ENCODE measurements at regions of chr5 and their contacts with region 1.

Region 1: GRCh38 chr5:32489791-32490582 is 45.4 kb upstream of the ZFR start:
- DNase-seq: no peak
- H3K4me3 ChIP-seq: no peak overlapping the region
- H3K27me3 ChIP-seq: no peaks in the 10 kb centered on the region
- CTCF ChIP-seq: peak; percentile 74

Region 2: GRCh38 chr5:32475334-32476097 is 14.5 kb before region 1 on chr5:
- CTCF ChIA-PET with region 1: interaction called, 12 read pairs
- POLR2A ChIA-PET with region 1: no interaction called
- DNase-seq: no peak
- H3K4me3 ChIP-seq: no peak overlapping the region
- H3K27me3 ChIP-seq: no peaks in the 10 kb centered on the region
- CTCF ChIP-seq: no peak

Region 3: DNA sequence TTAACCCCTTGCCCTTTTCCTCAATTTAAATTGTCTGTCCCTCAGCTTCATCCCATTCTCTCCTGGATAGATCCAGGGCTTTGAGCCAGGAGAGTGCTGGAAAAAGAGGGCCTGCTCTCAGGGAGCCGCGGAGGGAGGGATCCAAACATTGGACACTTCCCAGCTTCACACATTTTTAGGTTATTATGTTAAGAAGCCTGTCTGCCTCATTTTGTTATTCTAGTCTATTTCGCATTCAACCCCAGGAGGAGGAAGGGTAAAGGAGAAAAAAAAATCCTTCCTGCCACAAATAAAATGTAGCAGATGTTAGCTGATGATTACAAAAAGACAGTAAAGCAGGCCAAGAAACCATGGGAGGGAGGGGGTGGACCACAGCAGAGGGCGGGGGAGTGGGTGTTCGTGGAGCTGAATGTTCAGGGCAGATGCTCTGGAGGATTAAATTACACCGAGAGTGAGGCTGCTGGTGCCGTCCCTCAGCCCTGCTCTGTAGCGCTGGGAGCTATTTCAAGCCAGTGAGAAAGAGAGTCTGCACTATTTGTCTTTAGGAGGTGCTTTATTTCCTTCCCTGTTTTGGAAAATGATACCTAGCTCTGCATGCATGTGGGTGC is 15.1 kb after region 1 on chr5:
- CTCF ChIA-PET with region 1: interaction called, 33 read pairs
- POLR2A ChIA-PET with region 1: interaction called, 4 read pairs
- DNase-seq: peak; percentile 97
- H3K4me3 ChIP-seq: no peak overlapping the region
- H3K27me3 ChIP-seq: no peaks in the 10 kb centered on the region
- CTCF ChIP-seq: no peak

Region 4: GRCh38 chr5:32585446-32586275 is 95.7 kb after region 1 on chr5 and contains the start of gene SUB1:
- CTCF ChIA-PET with region 1: interaction called, 158 read pairs
- POLR2A ChIA-PET with region 1: interaction called, 3 read pairs
- DNase-seq: peak; percentile 47
- H3K4me3 ChIP-seq: peak within 1 kb of the TSS; percentile 97
- H3K27me3 ChIP-seq: no peaks in the 10 kb centered on the region
- CTCF ChIP-seq: peak; percentile 24; the same call in 1 of the 2 replicates
- polyA plus RNA-seq, gene SUB1: 46.8 and 152 TPM in 2 replicates

Region 5: GRCh38 chr5:32613050-32613672 is 123.2 kb after region 1 on chr5:
- CTCF ChIA-PET with region 1: interaction called, 22 read pairs
- POLR2A ChIA-PET with region 1: no interaction called
- DNase-seq: no peak
- H3K4me3 ChIP-seq: no peak overlapping the region
- H3K27me3 ChIP-seq: no peaks in the 10 kb centered on the region
- CTCF ChIP-seq: peak; percentile 89

Region 6: DNA sequence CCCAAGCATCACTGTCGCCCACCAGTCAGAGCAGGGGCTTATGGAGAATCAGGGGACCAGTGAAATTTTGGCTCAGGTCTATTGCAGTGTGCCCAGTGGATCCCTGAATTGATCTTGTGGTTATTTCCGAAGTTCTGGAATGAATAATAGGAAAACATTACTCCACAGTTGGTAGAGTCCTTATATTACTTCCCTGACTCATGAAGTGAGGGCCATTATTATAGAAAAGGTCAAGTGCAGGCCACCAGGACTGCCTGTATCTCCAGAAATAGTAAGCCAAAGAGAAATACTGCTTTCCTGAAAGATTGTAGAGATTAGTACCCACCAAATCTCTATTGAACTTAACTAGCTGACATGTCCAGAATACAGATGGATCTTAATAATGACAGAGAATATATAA is 556.1 kb after region 1 on chr5:
- CTCF ChIA-PET with region 1: no interaction called
- POLR2A ChIA-PET with region 1: no interaction called
- DNase-seq: no peak
- H3K4me3 ChIP-seq: no peak overlapping the region
- H3K27me3 ChIP-seq: no peaks in the 10 kb centered on the region
- CTCF ChIP-seq: no peak

Measured in BJ (cell line).